Activated CD4-positive, alpha-beta T cell treated with anti-CD3 and anti-CD28 coated beads, Interleukin-2, amount 10 ng/mL, durations not matched to agents 24 days and 14 days (primary cell): ENCODE measurements at regions of chr3 and their contacts with region 1.

Region 1: DNA sequence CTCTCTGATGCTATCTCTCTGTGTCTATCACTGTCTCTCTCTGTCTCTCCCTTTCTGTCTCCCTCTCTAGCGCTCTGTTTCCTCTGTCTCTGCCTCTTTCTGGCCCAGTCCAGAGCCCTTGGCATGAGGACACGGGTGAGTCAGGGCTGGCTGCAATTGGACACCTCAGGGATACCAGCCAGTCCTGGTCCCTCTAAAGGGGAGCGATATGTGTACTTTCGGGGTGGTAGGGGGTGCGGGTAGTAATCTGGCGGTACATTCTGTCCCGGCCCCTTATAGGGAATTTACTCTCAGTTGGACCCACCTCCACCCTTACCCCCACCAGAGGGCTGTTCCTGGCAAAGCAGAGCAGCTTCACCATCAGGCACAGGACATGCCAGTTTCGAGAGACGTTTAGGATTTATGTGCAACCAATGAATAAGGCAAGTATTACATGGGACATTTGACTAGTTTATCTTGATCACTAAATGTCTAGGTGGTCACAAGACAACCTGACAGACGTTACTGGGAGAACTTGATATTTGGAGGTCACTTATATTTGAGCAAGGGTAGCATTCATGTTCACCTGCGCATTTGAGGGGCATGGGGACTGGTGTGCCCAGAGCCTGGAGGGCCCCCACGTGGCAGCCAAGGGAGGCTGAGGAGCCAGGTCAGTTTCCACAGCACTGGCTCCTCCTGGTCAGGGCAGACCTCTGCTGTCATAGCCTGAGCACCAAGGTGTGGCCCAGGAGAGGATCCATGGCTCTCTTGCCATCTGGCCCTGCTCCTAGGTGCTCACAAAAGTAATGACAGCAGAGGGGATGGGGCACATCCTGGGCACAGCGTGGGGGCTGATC is 256.1 kb downstream of the PLCL2 start:
- DNase-seq: no peak
- H3K4me3 Mint-ChIP-seq: no peak overlapping the region
- H3K27ac Mint-ChIP-seq: no peak overlapping the region
- H3K4me1 Mint-ChIP-seq: peaks cover 25% of the 10 kb centered on the region
- H3K27me3 Mint-ChIP-seq: peaks cover 3% of the 10 kb centered on the region

Region 2: DNA sequence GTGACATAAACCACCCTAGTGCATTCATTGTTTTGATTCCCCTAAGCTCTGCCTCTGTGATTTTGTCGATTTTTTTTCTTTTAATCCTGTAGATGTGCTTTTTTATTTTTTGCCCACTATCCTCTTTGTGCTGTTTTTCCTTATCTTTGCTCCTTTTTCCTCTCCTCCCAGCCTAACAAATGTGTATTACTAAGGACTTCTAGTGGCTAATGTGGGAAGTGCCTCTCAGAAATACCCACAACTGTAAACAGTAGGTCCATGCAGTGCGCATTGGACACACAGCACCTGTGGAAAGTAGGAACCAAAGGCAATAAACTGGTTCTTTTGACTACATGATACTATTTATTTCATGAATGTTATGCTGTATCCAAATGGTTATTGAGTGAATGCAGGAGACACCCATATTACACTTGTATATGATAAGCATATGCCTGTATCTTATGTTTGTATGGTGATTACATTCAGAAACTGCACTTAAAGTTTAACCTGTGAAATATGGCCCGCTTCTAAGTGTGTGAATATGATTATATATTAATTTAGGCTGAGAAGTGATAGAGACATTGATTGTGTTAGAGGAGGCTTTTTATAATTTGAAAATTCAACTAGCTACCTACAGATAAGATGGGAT is 108.4 kb before region 1 on chr3:
- intact Hi-C with region 1: loop called (anchors 2 kb)
- DNase-seq: peak; percentile 55
- H3K4me3 Mint-ChIP-seq: peak overlapping the region; percentile 1
- H3K27ac Mint-ChIP-seq: peak overlapping the region; percentile 46
- H3K4me1 Mint-ChIP-seq: peaks cover 61% of the 10 kb centered on the region
- H3K27me3 Mint-ChIP-seq: no peaks in the 10 kb centered on the region